ENCODE measurements at regions of chr5 and their contacts with region 1.

Region 1: DNA sequence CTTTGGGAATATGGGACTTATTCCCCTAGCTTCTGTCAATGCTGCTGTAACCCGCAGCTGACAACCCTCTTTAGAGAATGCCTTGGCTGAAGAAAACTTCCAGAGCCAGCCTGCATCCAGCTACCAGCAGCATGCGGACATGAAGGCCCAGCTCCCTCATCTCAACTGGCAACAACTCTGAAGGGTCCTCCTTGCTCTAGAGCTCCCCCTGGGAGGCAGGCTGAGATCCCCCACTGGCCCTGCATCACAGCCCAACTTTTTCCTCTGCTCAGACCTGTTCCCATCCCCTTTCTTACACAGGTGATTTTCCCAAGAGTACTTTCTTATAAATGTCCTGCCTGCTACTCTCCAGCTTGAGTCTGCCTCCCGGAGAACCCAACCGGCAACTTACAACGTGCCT is 18.7 kb upstream of the WNT8A start:
- DNase-seq: peak; percentile 26
- ATAC-seq: no peak
- H3K4me3 Mint-ChIP-seq: no peak overlapping the region
- H3K27ac Mint-ChIP-seq: no peak overlapping the region
- H3K4me1 Mint-ChIP-seq: no peaks in the 10 kb centered on the region
- H3K27me3 Mint-ChIP-seq: no peaks in the 10 kb centered on the region
- CTCF ChIP-seq: no peak

Region 2: GRCh38 chr5:138024117-138024516 is 41.0 kb before region 1 on chr5:
- CTCF ChIA-PET with region 1: interaction called, 14 read pairs
- POLR2A ChIA-PET with region 1: no interaction called
- intact Hi-C with region 1: no loop called
- DNase-seq: no peak
- ATAC-seq: no peak
- H3K4me3 Mint-ChIP-seq: no peak overlapping the region
- H3K27ac Mint-ChIP-seq: peak overlapping the region; percentile 4
- H3K4me1 Mint-ChIP-seq: peaks cover 63% of the 10 kb centered on the region
- H3K27me3 Mint-ChIP-seq: no peaks in the 10 kb centered on the region
- CTCF ChIP-seq: no peak

Region 3: GRCh38 chr5:138054847-138055558 is 10.1 kb before region 1 on chr5:
- CTCF ChIA-PET with region 1: interaction called, 13 read pairs
- POLR2A ChIA-PET with region 1: no interaction called
- intact Hi-C with region 1: no loop called
- DNase-seq: no peak
- ATAC-seq: no peak
- H3K4me3 Mint-ChIP-seq: no peak overlapping the region
- H3K27ac Mint-ChIP-seq: no peak overlapping the region
- H3K4me1 Mint-ChIP-seq: peaks cover 2% of the 10 kb centered on the region
- H3K27me3 Mint-ChIP-seq: peaks cover 4% of the 10 kb centered on the region
- CTCF ChIP-seq: no peak

Region 4: GRCh38 chr5:138083702-138084101 is 18.6 kb after region 1 on chr5 and contains the start of gene WNT8A:
- CTCF ChIA-PET with region 1: interaction called, 33 read pairs
- POLR2A ChIA-PET with region 1: no interaction called
- intact Hi-C with region 1: no loop called
- DNase-seq: no peak
- ATAC-seq: no peak
- H3K4me3 Mint-ChIP-seq: no peak within 1 kb of the TSS
- H3K27ac Mint-ChIP-seq: no peak within 1 kb of the TSS
- H3K4me1 Mint-ChIP-seq: peaks cover 14% of the 10 kb centered on the region
- H3K27me3 Mint-ChIP-seq: no peaks in the 10 kb centered on the region
- CTCF ChIP-seq: no peak
- total RNA-seq, gene WNT8A: not detected

Region 5: DNA sequence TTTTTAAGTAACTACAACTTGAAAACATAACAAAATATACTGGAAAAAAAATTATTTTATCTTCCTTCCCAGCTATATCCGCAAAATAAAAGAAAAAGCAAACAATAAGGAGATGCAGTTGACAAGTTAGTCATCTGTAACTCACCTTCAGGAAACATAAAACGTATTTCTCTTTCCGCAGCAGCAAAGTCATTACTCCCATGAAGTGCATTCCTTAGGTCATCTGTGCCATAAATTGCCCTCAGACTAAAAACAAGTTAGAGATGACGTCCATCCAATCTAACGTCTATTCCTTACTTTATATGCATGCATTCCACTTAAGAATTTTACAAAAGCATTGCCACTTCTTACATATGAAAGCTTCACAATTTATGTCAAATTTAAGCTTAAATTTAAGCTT is 63.2 kb after region 1 on chr5:
- CTCF ChIA-PET with region 1: interaction called, 17 read pairs
- POLR2A ChIA-PET with region 1: no interaction called
- intact Hi-C with region 1: no loop called
- DNase-seq: no peak
- ATAC-seq: no peak
- H3K4me3 Mint-ChIP-seq: no peak overlapping the region
- H3K27ac Mint-ChIP-seq: no peak overlapping the region
- H3K4me1 Mint-ChIP-seq: no peaks in the 10 kb centered on the region
- H3K27me3 Mint-ChIP-seq: peaks cover 2% of the 10 kb centered on the region
- CTCF ChIP-seq: no peak

Measured in activated CD8-positive, alpha-beta T cell treated with anti-CD3 and anti-CD28 coated beads for 36 hours (primary cell).